ENCODE measurements at regions of chr22 and their contacts with region 1.

Region 1: DNA sequence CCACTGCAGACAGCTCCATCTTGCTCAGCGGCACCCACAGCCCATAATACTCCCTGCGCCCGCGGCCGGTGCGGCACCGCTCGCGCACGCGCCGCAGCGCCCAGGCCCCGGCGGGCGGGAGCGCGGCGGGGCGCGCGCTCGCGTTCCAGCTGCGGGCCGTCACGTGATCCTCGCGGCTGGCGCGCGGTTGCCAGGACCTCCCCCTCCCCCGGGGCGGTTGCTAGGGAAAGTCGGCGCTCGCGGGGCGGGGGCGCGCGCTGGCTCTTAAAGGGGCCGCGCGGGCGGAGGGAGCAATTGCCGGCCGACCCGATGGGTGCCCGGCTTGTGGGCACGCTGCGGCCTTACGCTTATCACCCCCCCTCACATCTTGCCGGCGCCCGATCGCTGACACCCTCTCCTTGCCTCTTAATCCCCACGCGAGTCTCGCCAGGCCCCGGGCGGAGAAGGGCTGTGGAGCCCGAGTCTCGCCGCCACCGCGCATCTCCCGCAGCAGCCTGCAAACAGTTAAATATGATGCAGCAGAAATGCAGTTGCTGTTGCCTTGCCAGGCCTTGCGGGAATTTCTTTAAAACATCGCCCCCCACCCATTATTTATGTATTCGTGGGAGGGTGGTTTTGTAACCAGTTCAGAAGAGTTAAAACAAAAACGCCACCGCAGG is at the start of gene CBX6:
- DNase-seq: peak; percentile 97
- ATAC-seq: peak; percentile 76
- H3K4me3 ChIP-seq: peak within 1 kb of the TSS; percentile 65 to 93 (median 75)
- H3K4me3 Mint-ChIP-seq: peak within 1 kb of the TSS; percentile 94
- H3K27ac ChIP-seq: peak within 1 kb of the TSS; percentile 42 to 54
- H3K27ac Mint-ChIP-seq: peak within 1 kb of the TSS; percentile 92
- H3K4me1 ChIP-seq: peaks cover 31 to 49% of the 10 kb centered on the region in 2 donors
- H3K4me1 Mint-ChIP-seq: peaks cover 49% of the 10 kb centered on the region
- H3K27me3 ChIP-seq: peaks cover 0 to 23% (median 8%) of the 10 kb centered on the region in 4 experiments
- H3K27me3 Mint-ChIP-seq: peaks cover 19% of the 10 kb centered on the region
- CTCF ChIP-seq: no peak
- total RNA-seq, gene CBX6: 55.1 and 57.6 TPM in 2 replicates

Region 2: GRCh38 chr22:38733329-38733723 is 139.0 kb before region 1 on chr22:
- CTCF ChIA-PET with region 1: interaction called, 23 read pairs
- POLR2A ChIA-PET with region 1: no interaction called
- intact Hi-C with region 1: no loop called
- DNase-seq: peak; percentile 69
- ATAC-seq: peak; percentile 68
- H3K4me3 ChIP-seq: no peak overlapping the region
- H3K4me3 Mint-ChIP-seq: no peak overlapping the region
- H3K27ac ChIP-seq: peak overlapping the region in 1 of 2 donors; percentile 61
- H3K27ac Mint-ChIP-seq: peak overlapping the region; percentile 78
- H3K4me1 ChIP-seq: peaks cover 0 to 18% of the 10 kb centered on the region in 2 donors
- H3K4me1 Mint-ChIP-seq: peaks cover 33% of the 10 kb centered on the region
- H3K27me3 ChIP-seq: no peaks in the 10 kb centered on the region
- H3K27me3 Mint-ChIP-seq: no peaks in the 10 kb centered on the region
- CTCF ChIP-seq: peak; percentile 84

Region 3: GRCh38 chr22:38860283-38861169 is 11.8 kb before region 1 on chr22:
- CTCF ChIA-PET with region 1: interaction called, 11 read pairs
- POLR2A ChIA-PET with region 1: no interaction called
- intact Hi-C with region 1: no loop called
- DNase-seq: no peak
- ATAC-seq: no peak
- H3K4me3 ChIP-seq: no peak overlapping the region
- H3K4me3 Mint-ChIP-seq: no peak overlapping the region
- H3K27ac ChIP-seq: no peak overlapping the region
- H3K27ac Mint-ChIP-seq: no peak overlapping the region
- H3K4me1 ChIP-seq: no peaks in the 10 kb centered on the region
- H3K4me1 Mint-ChIP-seq: peaks cover 4% of the 10 kb centered on the region
- H3K27me3 ChIP-seq: no peaks in the 10 kb centered on the region
- H3K27me3 Mint-ChIP-seq: peaks cover 6% of the 10 kb centered on the region
- CTCF ChIP-seq: no peak

Region 4: DNA sequence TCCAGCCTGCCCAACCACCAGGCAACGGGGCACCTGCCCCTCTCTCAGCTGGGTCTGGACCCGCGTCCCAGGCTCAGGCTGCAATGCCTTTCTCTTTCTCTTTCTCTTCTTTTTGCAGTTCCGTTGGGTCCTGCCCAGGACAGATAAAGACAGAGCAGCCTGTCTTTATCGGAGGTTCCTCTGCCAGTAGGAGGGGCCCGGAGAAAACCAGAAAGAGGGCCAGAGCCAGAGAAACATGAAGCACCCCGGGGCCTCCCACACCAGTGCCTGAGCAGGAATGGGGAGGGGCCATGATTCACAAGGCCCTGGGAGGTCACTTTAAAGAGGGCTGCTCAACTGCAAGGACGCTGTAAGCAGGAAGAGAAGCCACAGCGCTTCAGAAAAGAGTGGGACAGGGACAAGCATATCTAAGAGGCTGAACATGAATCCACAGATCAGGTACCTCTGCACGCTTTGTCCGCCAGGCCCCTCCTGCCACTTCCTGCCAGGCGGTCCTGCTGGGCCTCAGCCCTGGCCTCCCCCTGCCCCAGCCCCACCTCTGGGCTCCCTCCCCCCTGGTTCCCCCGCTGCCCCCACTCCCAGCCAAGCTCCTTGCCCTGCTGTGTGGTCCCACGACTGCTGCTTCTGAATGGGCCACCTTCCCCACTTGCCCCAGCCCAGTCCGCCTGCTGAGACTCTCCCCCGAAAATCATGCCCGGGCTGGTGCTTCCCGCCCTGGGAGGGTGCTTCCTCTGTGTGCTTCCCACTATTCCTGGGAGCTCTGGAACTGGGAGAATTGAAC is 141.8 kb after region 1 on chr22 and contains the start of gene APOBEC3C:
- CTCF ChIA-PET with region 1: interaction called, 167 read pairs
- POLR2A ChIA-PET with region 1: no interaction called
- intact Hi-C with region 1: no loop called
- DNase-seq: peak; percentile 85
- ATAC-seq: peak; percentile 96
- H3K4me3 ChIP-seq: peak within 1 kb of the TSS; percentile 38 to 88 (median 71)
- H3K4me3 Mint-ChIP-seq: peak within 1 kb of the TSS; percentile 96
- H3K27ac ChIP-seq: peak within 1 kb of the TSS; percentile 84 to 89
- H3K27ac Mint-ChIP-seq: peak within 1 kb of the TSS; percentile 87
- H3K4me1 ChIP-seq: peaks cover 15 to 43% of the 10 kb centered on the region in 2 donors
- H3K4me1 Mint-ChIP-seq: peaks cover 47% of the 10 kb centered on the region
- H3K27me3 ChIP-seq: no peaks in the 10 kb centered on the region
- H3K27me3 Mint-ChIP-seq: no peaks in the 10 kb centered on the region
- CTCF ChIP-seq: peak; percentile 23
- total RNA-seq, gene APOBEC3C: 99.1 and 107 TPM in 2 replicates

Region 5: GRCh38 chr22:39152511-39153219 is 280.4 kb after region 1 on chr22 and contains the start of gene CBX7:
- CTCF ChIA-PET with region 1: interaction called, 7 read pairs
- POLR2A ChIA-PET with region 1: interaction called, 4 read pairs
- intact Hi-C with region 1: loop called (anchors 1 kb)
- DNase-seq: peak; percentile 96
- ATAC-seq: peak; percentile 88
- H3K4me3 ChIP-seq: peak within 1 kb of the TSS; percentile 53 to 97 (median 87)
- H3K4me3 Mint-ChIP-seq: peak within 1 kb of the TSS; percentile 90
- H3K27ac ChIP-seq: peak within 1 kb of the TSS; percentile 81 to 97
- H3K27ac Mint-ChIP-seq: peak within 1 kb of the TSS; percentile 90
- H3K4me1 ChIP-seq: peaks cover 51 to 53% of the 10 kb centered on the region in 2 donors
- H3K4me1 Mint-ChIP-seq: peaks cover 43% of the 10 kb centered on the region
- H3K27me3 ChIP-seq: peaks cover 0 to 14% (median 8%) of the 10 kb centered on the region in 4 experiments
- H3K27me3 Mint-ChIP-seq: peaks cover 33% of the 10 kb centered on the region
- CTCF ChIP-seq: no peak
- total RNA-seq, gene CBX7: 141 and 147 TPM in 2 replicates

Region 6: GRCh38 chr22:39520054-39520891 is 648.0 kb after region 1 on chr22 and contains the start of gene ATF4:
- CTCF ChIA-PET with region 1: no interaction called
- POLR2A ChIA-PET with region 1: no interaction called
- intact Hi-C with region 1: loop called (anchors 10 kb)
- DNase-seq: peak; percentile 100
- ATAC-seq: peak; percentile 89
- H3K4me3 ChIP-seq: peak within 1 kb of the TSS; percentile 82 to 100 (median 99)
- H3K4me3 Mint-ChIP-seq: peak within 1 kb of the TSS; percentile 94
- H3K27ac ChIP-seq: peak within 1 kb of the TSS; percentile 91 to 95
- H3K27ac Mint-ChIP-seq: peak within 1 kb of the TSS; percentile 98
- H3K4me1 ChIP-seq: peaks cover 31 to 49% of the 10 kb centered on the region in 2 donors
- H3K4me1 Mint-ChIP-seq: peaks cover 59% of the 10 kb centered on the region
- H3K27me3 ChIP-seq: no peaks in the 10 kb centered on the region
- H3K27me3 Mint-ChIP-seq: no peaks in the 10 kb centered on the region
- CTCF ChIP-seq: no peak
- total RNA-seq, gene ATF4: 236 and 244 TPM in 2 replicates

Measured in B cell (primary cell).